GM18951 (cell line): ENCODE measurements at regions of chr1 and their contacts with region 1.

Region 1: DNA sequence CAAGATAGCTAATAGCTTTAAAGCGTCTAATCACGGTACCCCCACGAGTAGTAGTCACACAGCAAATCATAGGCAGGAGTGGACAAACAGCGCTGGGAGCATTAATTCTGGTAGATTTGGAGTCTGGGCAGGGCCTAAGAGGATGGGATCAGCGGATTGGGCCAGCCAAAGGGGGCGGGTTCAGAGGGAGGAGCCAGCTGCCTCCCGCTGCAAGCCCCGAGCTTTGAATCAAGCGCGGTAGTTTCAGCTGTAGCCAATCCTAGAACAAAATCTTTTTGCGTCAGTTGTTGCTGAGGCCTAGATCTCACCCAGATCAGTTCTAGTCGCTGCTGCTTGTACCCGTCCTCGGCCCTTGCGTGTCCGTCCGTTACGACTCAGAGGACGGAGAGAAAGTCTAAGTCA is 576 bp upstream of the NASP start:
- POLR2A ChIP-seq: peak; percentile 15

Region 2: DNA sequence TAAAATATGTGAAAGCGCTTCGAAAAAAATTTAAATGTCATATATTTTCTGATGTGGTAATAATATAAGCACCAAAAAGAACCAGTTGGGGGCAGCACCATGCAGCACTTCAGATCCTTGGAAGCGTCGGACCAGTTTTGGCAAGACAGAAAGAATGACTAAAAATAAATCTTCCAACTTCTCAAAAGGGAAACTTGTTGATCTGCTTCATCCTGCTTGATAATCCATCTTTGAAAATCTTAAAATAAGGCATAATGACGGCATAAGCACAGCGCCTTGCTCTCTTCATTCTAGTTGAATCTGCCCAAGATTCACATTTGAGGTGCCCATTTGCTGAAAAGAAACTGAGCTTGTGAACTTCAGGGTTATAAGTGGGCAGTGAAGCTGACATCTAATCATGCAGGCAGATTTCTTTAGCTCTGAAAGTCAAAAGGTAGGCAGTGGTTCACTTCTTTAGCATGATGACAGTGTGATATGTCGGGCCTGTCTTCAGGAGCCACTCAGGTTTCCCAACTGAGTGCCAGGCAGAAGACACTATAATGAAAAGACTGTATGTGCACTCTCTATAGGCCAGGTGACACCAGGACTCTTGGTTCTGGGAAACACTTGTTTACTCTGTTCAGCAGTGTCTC is 223.3 kb before region 1 on chr1:
- in situ Hi-C with region 1: loop called (anchors 10 kb)
- POLR2A ChIP-seq: no peak